Posterior vena cava (tissue), 2 donors: ENCODE measurements at regions of chr9 and their contacts with region 1.

Region 1: GRCh38 chr9:113164536-113165300 is 13.9 kb downstream of the SLC31A2 start:
- DNase-seq: no peak

Region 2: GRCh38 chr9:113349445-113350094 is 184.9 kb after region 1 on chr9 and contains the start of gene BSPRY:
- intact Hi-C with region 1: loop called in 1 of 2 experiments (anchors 5 kb)
- DNase-seq: peak; percentile 77
- total RNA-seq, gene BSPRY: 0.14 to 0.28 TPM